Activated T-helper 2 cell treated with anti-CD3 and anti-CD28 coated beads, Interferon-gamma antibody, Interleukin-2, Interleukin-4, amounts not matched to agents 10 μg/mL and 5 μg/mL and 100 μg/mL, durations not matched to agents 14 hours and 24 hours and 36 hours (primary cell): ENCODE measurements at regions of chr11 and their contacts with region 1.

Region 1: GRCh38 chr11:46845740-46846509 is at the start of gene CKAP5:
- DNase-seq: peak; percentile 83
- H3K4me3 Mint-ChIP-seq: peak within 1 kb of the TSS; percentile 96
- H3K27ac Mint-ChIP-seq: peak within 1 kb of the TSS; percentile 97
- H3K4me1 Mint-ChIP-seq: peaks cover 35% of the 10 kb centered on the region
- H3K27me3 Mint-ChIP-seq: no peaks in the 10 kb centered on the region
- total RNA-seq, gene CKAP5: 127 and 136 TPM in 2 replicates

Region 2: DNA sequence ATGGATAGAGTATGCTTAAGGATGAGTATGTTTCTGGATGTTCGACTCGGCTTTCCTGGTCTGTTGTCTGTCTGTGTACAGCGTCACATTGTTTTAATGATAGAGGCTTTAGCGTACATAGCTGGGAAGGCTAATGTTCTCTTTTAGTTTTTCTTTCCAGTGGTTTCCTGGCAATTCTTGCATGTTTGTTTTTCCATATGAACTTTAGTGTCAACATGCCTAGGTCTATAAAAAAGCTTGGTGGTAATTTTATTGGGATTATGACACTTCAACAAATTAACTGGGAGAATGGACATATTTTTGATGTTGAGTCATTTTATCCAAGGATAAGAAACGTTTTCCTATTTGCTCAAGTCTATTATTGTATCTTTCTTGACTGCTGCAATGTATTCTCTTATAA is 109.3 kb before region 1 on chr11:
- intact Hi-C with region 1: no loop called
- DNase-seq: no peak
- H3K4me3 Mint-ChIP-seq: no peak overlapping the region
- H3K27ac Mint-ChIP-seq: no peak overlapping the region
- H3K4me1 Mint-ChIP-seq: no peaks in the 10 kb centered on the region
- H3K27me3 Mint-ChIP-seq: no peaks in the 10 kb centered on the region

Region 3: GRCh38 chr11:46826310-46827044 is 19.4 kb before region 1 on chr11:
- intact Hi-C with region 1: loop called (anchors 2 kb)
- DNase-seq: peak; percentile 65
- H3K4me3 Mint-ChIP-seq: peak overlapping the region; percentile 70
- H3K27ac Mint-ChIP-seq: no peak overlapping the region
- H3K4me1 Mint-ChIP-seq: peaks cover 40% of the 10 kb centered on the region
- H3K27me3 Mint-ChIP-seq: no peaks in the 10 kb centered on the region